ENCODE measurements at regions of chr1 and their contacts with region 1.

Region 1: DNA sequence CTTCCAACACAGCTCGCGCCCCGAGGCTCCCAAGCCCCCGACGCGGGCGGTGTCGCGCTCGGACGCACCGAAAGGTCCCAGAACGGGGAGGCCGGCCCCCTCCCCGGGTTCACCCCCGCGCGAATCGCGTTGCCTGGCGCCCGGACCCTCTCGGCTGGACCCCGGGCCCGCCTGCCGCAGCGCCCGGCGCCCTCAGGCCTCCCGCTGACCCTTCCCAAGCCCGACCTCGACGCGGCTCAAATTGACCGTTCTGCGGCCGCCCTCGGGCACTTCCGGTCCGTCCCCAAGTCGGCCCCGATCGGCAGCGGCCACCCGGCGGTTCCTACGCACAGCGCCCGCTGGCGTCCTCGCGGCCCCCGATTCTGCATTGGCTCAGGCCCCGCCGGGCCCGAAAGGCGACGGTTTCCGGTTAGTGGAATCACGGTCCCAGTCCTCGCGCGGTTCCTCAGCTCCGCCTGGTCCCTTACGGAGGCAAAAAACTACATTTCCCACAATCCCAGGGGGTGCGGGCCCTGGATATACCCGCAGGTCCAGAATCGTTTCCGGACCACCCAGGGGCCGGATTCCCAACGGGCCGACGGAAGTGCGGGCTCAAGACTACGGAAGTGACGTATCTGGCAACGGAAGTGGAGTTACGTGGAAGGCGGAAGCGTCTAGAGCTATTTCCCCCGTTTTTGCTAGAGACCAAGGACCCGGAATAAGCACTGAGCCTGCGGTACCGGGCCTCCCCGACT is at the start of gene AURKAIP1:
- DNase-seq: peak; percentile 98
- ATAC-seq: peak; percentile 97
- H3K4me3 Mint-ChIP-seq: peak within 1 kb of the TSS; percentile 87
- H3K27ac Mint-ChIP-seq: peak within 1 kb of the TSS; percentile 91
- H3K4me1 Mint-ChIP-seq: peaks cover 26% of the 10 kb centered on the region
- H3K27me3 Mint-ChIP-seq: no peaks in the 10 kb centered on the region
- total RNA-seq, gene AURKAIP1: 89.5 to 117 TPM

Region 2: DNA sequence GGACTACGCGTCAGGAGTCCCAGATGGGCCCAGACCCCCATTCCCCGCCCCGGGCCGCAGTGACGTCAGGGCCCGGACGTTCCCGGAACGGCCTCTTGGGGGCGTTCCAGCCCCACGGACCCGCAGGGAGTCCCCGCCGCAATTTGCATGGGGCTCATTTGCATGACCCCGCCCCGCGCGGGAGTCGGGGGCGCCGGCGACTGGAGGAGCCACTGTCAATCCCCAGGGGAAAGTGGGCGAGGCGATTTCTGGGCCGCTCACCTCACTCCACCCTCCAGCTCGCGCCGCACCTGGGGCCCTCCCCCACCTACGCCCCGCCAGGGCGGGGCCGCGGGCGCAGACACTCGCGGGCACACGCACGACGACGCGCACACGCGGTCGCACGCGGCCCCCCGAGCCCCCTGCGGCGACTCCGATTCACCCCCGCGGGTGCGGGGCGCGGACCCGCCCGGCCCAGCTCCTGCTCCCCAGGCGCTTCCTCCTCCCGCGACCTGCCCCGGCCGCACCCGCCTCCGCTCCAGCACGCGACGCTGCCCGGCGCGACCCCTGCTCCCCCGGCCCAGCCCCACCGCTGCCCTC is 342.0 kb before region 1 on chr1:
- CTCF ChIA-PET with region 1: no interaction called
- POLR2A ChIA-PET with region 1: no interaction called
- intact Hi-C with region 1: loop called in 1 of 2 experiments (anchors 1 kb)
- DNase-seq: peak; percentile 97
- ATAC-seq: peak; percentile 95
- H3K4me3 Mint-ChIP-seq: peak overlapping the region; percentile 33
- H3K27ac Mint-ChIP-seq: no peak overlapping the region
- H3K4me1 Mint-ChIP-seq: peaks cover 5% of the 10 kb centered on the region
- H3K27me3 Mint-ChIP-seq: peaks cover 18% of the 10 kb centered on the region

Region 3: GRCh38 chr1:1324521-1325287 is 50.4 kb before region 1 on chr1 and contains the starts of genes CPTP and INTS11:
- CTCF ChIA-PET with region 1: no interaction called
- POLR2A ChIA-PET with region 1: interaction called, 3 read pairs
- intact Hi-C with region 1: loop called (anchors 1 to 2 kb)
- DNase-seq: peak; percentile 98
- ATAC-seq: peak; percentile 90
- H3K4me3 Mint-ChIP-seq: peak within 1 kb of the TSS; percentile 80
- H3K27ac Mint-ChIP-seq: peak within 1 kb of the TSS; percentile 83
- H3K4me1 Mint-ChIP-seq: peaks cover 31% of the 10 kb centered on the region
- H3K27me3 Mint-ChIP-seq: no peaks in the 10 kb centered on the region
- total RNA-seq, gene CPTP: 9.9 to 11.4 TPM
- total RNA-seq, gene INTS11: 117 to 151 TPM

Region 4: GRCh38 chr1:1361982-1362423 is 13.1 kb before region 1 on chr1:
- CTCF ChIA-PET with region 1: interaction called, 11 read pairs
- POLR2A ChIA-PET with region 1: no interaction called
- intact Hi-C with region 1: no loop called
- DNase-seq: no peak
- ATAC-seq: no peak
- H3K4me3 Mint-ChIP-seq: no peak overlapping the region
- H3K27ac Mint-ChIP-seq: no peak overlapping the region
- H3K4me1 Mint-ChIP-seq: peaks cover 10% of the 10 kb centered on the region
- H3K27me3 Mint-ChIP-seq: peaks cover 7% of the 10 kb centered on the region

Region 5: GRCh38 chr1:1406817-1407635 is 31.9 kb after region 1 on chr1 and contains the start of gene MRPL20:
- CTCF ChIA-PET with region 1: interaction called, 4 read pairs
- POLR2A ChIA-PET with region 1: interaction called, 9 read pairs
- intact Hi-C with region 1: loop called (anchors 1 kb)
- DNase-seq: peak; percentile 98
- ATAC-seq: peak; percentile 95
- H3K4me3 Mint-ChIP-seq: peak within 1 kb of the TSS; percentile 92
- H3K27ac Mint-ChIP-seq: peak within 1 kb of the TSS; percentile 91
- H3K4me1 Mint-ChIP-seq: peaks cover 41% of the 10 kb centered on the region
- H3K27me3 Mint-ChIP-seq: no peaks in the 10 kb centered on the region
- total RNA-seq, gene MRPL20: 126 to 143 TPM

Region 6: DNA sequence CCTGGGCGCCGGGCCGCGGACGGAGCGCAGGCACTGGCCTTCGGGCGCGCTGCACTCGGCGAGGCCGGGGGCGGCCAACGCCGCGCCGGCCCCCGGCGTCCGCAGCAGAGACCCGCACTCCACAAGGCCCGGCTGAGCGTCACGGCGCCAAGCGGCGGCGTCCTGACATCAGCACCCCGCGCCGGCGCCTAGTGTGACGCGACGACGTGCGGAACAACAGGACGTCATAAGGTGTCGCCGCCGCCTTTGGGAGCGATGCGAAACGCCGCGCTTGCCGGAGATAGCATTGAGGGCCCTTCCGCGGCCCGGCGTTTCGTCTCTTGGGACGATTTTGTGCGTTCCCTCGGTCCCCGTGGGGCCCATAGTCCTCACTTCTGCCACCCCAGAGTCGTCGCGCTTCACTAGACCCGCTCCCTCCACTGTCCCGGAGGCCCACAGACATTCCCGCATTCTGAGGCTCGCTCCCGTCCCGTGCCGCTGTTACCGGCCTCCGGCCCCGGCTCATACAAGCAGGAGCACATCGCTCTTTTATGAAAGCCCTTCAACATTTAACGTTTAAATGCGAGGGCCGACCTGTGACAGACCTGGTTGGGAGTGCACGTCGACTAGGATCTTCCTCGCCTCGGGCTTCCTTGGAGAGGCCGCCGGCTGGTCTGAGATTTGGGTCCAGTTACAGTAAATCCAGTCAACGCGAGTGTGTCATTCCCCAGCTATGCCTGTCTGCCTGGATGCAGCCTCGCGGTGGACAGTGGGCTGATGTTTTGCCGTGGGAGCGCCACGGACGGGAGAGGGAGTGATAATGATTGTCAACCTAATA is 199.8 kb after region 1 on chr1 and contains the start of gene SSU72:
- CTCF ChIA-PET with region 1: no interaction called
- POLR2A ChIA-PET with region 1: interaction called, 3 read pairs
- intact Hi-C with region 1: loop called in 1 of 2 experiments (anchors 1 kb)
- DNase-seq: peak; percentile 97
- ATAC-seq: peak; percentile 84
- H3K4me3 Mint-ChIP-seq: peak within 1 kb of the TSS; percentile 99
- H3K27ac Mint-ChIP-seq: peak within 1 kb of the TSS; percentile 98
- H3K4me1 Mint-ChIP-seq: peaks cover 28% of the 10 kb centered on the region
- H3K27me3 Mint-ChIP-seq: no peaks in the 10 kb centered on the region
- total RNA-seq, gene SSU72: 105 to 123 TPM

Measured in activated CD4-positive, alpha-beta T cell treated with anti-CD3 and anti-CD28 coated beads for 36 hours (primary cell).